ENCODE measurements at regions of chr9 and their contacts with region 1.

Region 1: GRCh38 chr9:116096853-116097252 is 56.7 kb upstream of the PAPPA start:
- DNase-seq: peak in 1 of 2 experiments; percentile 15
- H3K4me3 ChIP-seq: no peak overlapping the region
- H3K27ac ChIP-seq: no peak overlapping the region
- H3K4me1 ChIP-seq: peaks cover 13% of the 10 kb centered on the region
- H3K27me3 ChIP-seq: no peaks in the 10 kb centered on the region
- CTCF ChIP-seq: no peak

Region 2: GRCh38 chr9:116008278-116008677 is 88.6 kb before region 1 on chr9:
- CTCF ChIA-PET with region 1: no interaction called
- POLR2A ChIA-PET with region 1: no interaction called
- intact Hi-C with region 1: loop called (anchors 5 kb)
- DNase-seq: peak; percentile 74 to 93
- H3K4me3 ChIP-seq: peak overlapping the region; percentile 17; the same call in 1 of the 2 replicates
- H3K27ac ChIP-seq: peak overlapping the region; percentile 84
- H3K4me1 ChIP-seq: peaks cover 55% of the 10 kb centered on the region
- H3K27me3 ChIP-seq: no peaks in the 10 kb centered on the region
- CTCF ChIP-seq: no peak

Region 3: GRCh38 chr9:116081435-116082120 is 15.3 kb before region 1 on chr9:
- CTCF ChIA-PET with region 1: no interaction called
- POLR2A ChIA-PET with region 1: no interaction called
- intact Hi-C with region 1: no loop called
- DNase-seq: no peak
- H3K4me3 ChIP-seq: no peak overlapping the region
- H3K27ac ChIP-seq: no peak overlapping the region
- H3K4me1 ChIP-seq: no peaks in the 10 kb centered on the region; the same call in 1 of the 2 replicates
- H3K27me3 ChIP-seq: no peaks in the 10 kb centered on the region
- CTCF ChIP-seq: no peak

Region 4: DNA sequence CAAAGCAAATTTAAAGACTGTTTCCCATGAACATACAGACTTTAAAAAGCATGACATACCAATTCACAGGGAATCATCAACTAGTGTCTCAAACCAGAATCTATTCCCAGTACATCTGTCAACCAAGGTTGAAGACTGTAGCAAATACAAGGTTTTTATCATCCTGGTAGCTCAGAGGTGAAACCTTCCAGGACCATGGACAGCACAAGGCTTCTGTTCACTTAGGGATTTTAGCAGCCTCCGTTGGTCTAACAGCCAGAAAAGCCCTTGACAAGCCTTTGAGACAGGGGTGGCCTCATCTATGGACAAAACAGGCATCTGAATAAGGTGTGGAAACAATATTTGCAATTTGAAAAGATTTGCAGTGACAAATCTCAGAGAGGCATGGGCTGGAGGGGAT is 709.2 kb after region 1 on chr9:
- CTCF ChIA-PET with region 1: no interaction called
- POLR2A ChIA-PET with region 1: no interaction called
- intact Hi-C with region 1: no loop called
- DNase-seq: peak in 1 of 2 experiments; percentile 9
- H3K4me3 ChIP-seq: no peak overlapping the region
- H3K27ac ChIP-seq: no peak overlapping the region
- H3K4me1 ChIP-seq: no peaks in the 10 kb centered on the region
- H3K27me3 ChIP-seq: peaks cover 7% of the 10 kb centered on the region; the same call in 1 of the 2 replicates
- CTCF ChIP-seq: no peak

Measured in PC-9 (cell line).